ENCODE measurements at regions of chr4 and their contacts with region 1.

Region 1: GRCh38 chr4:184733654-184734524 is at the start of gene CENPU:
- DNase-seq: peak; percentile 91 to 97 (median 96)
- H3K4me3 ChIP-seq: peak within 1 kb of the TSS; percentile 49 to 100 (median 84)
- H3K27ac ChIP-seq: peak within 1 kb of the TSS in 45 of 59 donors; percentile 4 to 84 (median 66)
- H3K27me3 ChIP-seq: no peaks in the 10 kb centered on the region
- CTCF ChIP-seq: peak in 27 of 56 donors; percentile 9 to 54 (median 30)
- total RNA-seq, gene CENPU: 0.33 to 3.8 (median 1.1) TPM in 106 of 120 experiments, not detected in the others

Region 2: DNA sequence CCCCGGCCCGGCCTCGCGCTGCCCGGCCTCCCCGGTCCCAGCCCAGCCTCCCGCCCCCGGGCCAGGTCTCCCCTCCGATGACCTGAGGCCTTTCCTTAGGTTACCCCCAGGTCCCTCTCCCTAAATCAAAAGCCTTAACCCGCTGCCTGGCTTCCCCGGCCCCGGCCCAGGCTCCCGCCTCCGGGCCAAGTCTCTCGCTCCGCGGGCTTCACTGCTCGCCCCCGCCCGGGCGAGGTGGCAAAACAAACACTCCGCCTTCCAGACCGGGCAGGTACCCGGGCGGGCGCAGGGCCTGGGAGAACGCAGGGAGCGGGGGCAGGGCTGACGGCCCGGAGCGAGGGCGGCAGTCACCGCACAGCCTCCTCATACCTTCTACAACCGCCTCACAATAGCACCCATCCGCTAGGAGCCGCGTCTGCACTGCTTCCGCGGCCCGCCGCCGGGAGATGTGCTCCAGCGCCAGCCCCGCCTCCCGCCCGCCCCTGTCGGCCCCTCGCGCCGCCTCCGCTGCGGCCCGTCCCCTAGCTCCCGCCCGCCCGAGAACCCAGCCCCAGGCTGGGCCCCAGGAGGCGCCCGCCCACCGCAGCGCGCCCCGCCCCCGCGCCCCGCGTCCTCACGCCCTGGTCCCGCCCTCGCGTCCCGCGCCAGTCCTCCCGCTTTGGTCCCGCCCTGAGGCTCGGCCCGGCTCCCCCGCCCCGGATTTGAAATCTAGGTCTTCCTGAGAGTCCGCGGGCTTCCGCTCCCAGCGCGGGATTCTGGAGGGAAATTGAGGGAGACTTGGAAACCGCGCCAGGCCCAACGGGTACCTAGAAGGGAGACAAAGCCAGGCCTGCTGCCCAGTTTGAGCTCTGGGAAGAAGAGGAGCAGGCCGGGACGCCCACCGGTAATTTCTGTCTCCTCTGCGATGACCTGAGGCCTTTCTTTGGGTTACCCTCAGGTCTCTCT is 84.6 kb before region 1 on chr4 and contains the starts of genes CASP3 and PRIMPOL:
- intact Hi-C with region 1: loop called (anchors 5 kb)
- DNase-seq: peak; percentile 93 to 99 (median 96)
- H3K4me3 ChIP-seq: peak within 1 kb of the TSS; percentile 60 to 97 (median 89)
- H3K27ac ChIP-seq: peak within 1 kb of the TSS; percentile 55 to 98 (median 94)
- H3K27me3 ChIP-seq: no peaks in the 10 kb centered on the region
- CTCF ChIP-seq: peak in 51 of 56 donors; percentile 14 to 67 (median 44)
- total RNA-seq, gene CASP3: 6.4 to 17.2 (median 12.2) TPM
- total RNA-seq, gene PRIMPOL: 9.5 to 30.5 (median 17.5) TPM

Measured in dorsolateral prefrontal cortex (tissue), 120 donors.